GM12878 (cell line): ENCODE measurements at regions of chr4 and their contacts with region 1.

Region 1: DNA sequence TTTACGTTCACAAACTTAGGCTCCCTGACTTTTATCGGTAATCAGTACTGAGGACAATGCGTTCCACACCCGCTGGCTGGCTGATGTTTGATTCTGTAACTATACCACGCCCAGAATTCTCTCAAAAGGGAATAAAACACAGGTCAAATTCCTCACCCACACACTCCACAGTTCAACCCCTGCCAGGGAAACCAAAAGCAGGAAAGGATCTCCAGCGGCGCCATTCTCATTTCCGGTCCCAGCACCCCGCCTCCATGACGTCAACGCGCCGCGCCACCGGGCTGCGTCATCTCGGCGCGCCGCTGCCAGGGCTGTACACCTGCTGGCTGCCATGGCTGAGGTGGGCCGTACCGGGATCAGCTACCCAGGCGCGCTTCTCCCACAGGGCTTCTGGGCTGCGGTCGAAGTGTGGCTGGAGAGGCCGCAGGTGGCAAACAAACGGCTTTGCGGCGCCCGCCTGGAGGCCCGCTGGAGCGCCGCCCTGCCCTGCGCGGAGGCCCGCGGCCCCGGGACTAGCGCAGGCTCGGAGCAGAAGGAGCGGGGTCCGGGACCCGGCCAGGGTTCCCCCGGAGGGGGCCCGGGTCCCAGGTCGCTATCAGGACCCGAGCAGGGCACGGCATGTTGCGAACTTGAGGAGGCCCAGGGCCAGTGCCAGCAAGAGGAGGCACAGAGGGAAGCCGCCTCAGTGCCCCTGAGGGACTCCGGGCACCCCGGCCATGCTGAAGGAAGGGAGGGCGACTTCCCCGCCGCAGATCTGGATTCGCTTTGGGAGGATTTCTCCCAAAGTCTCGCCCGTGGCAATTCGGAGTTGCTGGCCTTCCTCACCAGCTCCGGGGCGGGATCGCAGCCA is at the starts of genes ACOX3 and TRMT44:
- DNase-seq: peak; percentile 74
- ATAC-seq: peak; percentile 87
- H3K4me3 ChIP-seq: peak within 1 kb of the TSS; percentile 87
- H3K27ac ChIP-seq: peak within 1 kb of the TSS; percentile 96
- H3K4me1 ChIP-seq: peaks cover 12% of the 10 kb centered on the region
- H3K27me3 ChIP-seq: no peaks in the 10 kb centered on the region
- CTCF ChIP-seq: no peak
- EP300 ChIP-seq: no peak
- POLR2A ChIP-seq: peak; percentile 89
- RAD21 ChIP-seq: no peak
- polyA plus RNA-seq, gene ACOX3: 2.0 to 2.6 TPM
- polyA plus RNA-seq, gene TRMT44: 1.3 to 2.3 TPM

Region 2: DNA sequence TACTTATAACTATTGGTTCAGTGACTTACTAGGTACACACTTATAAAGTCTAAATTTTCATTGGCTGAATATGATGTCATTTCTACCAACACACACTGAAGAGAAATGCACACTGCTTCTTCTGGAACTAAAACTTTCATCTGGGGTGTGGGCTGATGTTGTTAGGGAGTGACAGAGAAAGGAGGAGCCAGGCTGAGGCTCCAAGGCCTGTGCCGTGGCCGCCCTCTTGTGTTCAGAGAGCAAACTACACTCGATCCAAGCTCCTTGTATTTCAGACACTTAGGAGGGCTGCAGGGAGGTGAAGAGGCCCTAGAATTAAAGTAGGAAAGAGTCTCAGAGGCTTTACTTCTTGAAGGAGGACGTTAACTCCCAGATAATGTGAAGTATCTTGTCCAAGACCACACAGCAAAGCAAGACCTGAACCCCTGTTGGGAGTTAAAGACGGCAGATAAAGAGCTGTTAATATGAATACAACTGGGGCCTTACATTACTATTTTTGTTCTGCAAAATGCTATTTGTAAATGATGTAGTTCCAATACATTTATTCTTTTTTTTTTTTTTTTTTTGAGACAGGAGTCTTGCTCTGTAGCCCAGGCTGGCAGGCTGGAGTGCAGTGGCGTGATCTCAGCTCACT is 638.5 kb before region 1 on chr4:
- CTCF ChIA-PET with region 1: no interaction called
- POLR2A ChIA-PET with region 1: no interaction called
- RAD21 ChIA-PET with region 1: no interaction called
- SMC1A ChIA-PET with region 1: no interaction called
- in situ Hi-C with region 1: no loop called
- intact Hi-C with region 1: no loop called
- DNase-seq: no peak
- ATAC-seq: peak; percentile 96
- H3K4me3 ChIP-seq: no peak overlapping the region
- H3K27ac ChIP-seq: no peak overlapping the region
- H3K4me1 ChIP-seq: no peaks in the 10 kb centered on the region
- H3K27me3 ChIP-seq: 0 out of 4 replicates have a peak, but pooled peaks cover 0 to 3% of the 10 kb centered on the region in 2 experiments
- CTCF ChIP-seq: peak; percentile 91 to 95 (median 91)
- EP300 ChIP-seq: no peak
- POLR2A ChIP-seq: no peak
- RAD21 ChIP-seq: peak; percentile 98

Region 3: GRCh38 chr4:8428293-8429097 is 12.2 kb before region 1 on chr4:
- CTCF ChIA-PET with region 1: interaction called, 3 read pairs
- POLR2A ChIA-PET with region 1: interaction called, 11 read pairs
- RAD21 ChIA-PET with region 1: interaction called, 9 read pairs
- SMC1A ChIA-PET with region 1: interaction called, 10 read pairs
- in situ Hi-C with region 1: no loop called
- intact Hi-C with region 1: no loop called
- DNase-seq: peak; percentile 41
- ATAC-seq: peak; percentile 98
- H3K4me3 ChIP-seq: peak overlapping the region; percentile 71
- H3K27ac ChIP-seq: peak overlapping the region; percentile 64
- H3K4me1 ChIP-seq: peaks cover 5% of the 10 kb centered on the region
- H3K27me3 ChIP-seq: no peaks in the 10 kb centered on the region
- CTCF ChIP-seq: peak in 2 of 3 experiments; percentile 41 to 46; a peak in 2 of 6 replicates
- EP300 ChIP-seq: no peak
- POLR2A ChIP-seq: peak; percentile 89
- RAD21 ChIP-seq: 0 out of 2 replicates have a peak, but pooled peaks have one; percentile 12